ENCODE measurements at regions of chr14 and their contacts with region 1.

Region 1: DNA sequence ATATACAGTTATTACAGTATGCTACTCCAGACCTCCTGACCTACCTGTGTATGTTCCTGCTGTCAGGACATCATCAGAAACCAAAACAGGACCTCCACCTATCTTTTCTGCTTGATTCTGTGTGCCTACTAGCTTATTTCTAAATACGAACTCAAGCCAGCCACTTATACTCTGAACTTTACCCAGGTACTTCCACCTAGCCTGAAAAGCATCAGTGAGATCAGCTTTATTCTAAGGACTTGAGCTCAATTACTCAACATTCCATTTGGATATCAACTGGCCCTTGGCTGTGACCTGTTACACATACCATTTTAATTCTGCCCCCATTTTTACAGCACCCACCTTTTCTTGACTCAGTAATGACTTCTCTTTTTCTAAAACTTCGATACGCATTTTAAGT is 29.2 kb downstream of the TRIP11 start:
- DNase-seq: no peak
- ATAC-seq: no peak
- H3K4me3 Mint-ChIP-seq: no peak overlapping the region
- H3K27ac Mint-ChIP-seq: peak overlapping the region in 2 of 10 donors; percentile 24 to 41
- H3K4me1 Mint-ChIP-seq: peaks cover 8 to 13% (median 11%) of the 10 kb centered on the region in 4 donors
- H3K27me3 Mint-ChIP-seq: no peaks in the 10 kb centered on the region

Region 2: GRCh38 chr14:91996948-91997371 is 13.7 kb before region 1 on chr14:
- POLR2A ChIA-PET with region 1: interaction called, 14 read pairs
- DNase-seq: peak in 4 of 10 donors; percentile 19 to 53 (median 50)
- ATAC-seq: peak; percentile 50 to 69
- H3K4me3 Mint-ChIP-seq: peak overlapping the region in 2 of 10 donors; percentile 15 to 36
- H3K27ac Mint-ChIP-seq: peak overlapping the region in 7 of 10 donors; percentile 4 to 90 (median 65)
- H3K4me1 Mint-ChIP-seq: peaks cover 16 to 46% (median 43%) of the 10 kb centered on the region in 4 donors
- H3K27me3 Mint-ChIP-seq: no peaks in the 10 kb centered on the region